Ascending aorta (tissue), 2 donors: ENCODE measurements at regions of chr11 and their contacts with region 1.

Region 1: DNA sequence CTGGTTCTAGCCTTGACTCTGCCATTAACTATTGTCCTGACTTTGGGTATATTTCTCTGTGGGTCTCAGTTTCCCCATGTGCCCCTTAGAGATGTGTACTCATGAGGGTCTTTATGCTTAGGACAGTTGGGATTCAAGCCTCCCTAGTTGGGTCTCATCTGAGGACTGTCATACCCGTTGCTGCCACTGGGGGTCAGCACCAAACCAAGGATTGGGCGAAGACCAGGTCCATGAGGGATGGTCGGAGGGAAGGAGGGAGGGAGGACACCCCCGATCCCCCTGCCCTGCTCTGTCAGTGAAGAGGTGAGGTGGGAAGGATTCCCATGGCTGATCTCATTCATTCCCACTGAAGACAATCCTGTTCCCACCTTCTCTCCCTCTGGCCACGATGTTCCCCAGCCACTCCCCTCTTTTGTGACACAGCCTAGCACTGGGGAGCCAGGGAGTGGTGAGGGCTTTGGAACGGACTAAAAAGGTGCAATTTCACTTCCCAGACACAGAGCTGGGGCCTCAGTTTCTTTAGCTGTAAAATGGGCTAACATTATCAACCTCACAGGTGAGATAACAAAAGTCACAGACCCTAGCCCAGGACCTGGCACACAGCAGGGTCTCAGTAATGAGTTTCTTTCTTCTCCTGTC is 12.4 kb upstream of the KLHL35 start:
- DNase-seq: peak; percentile 33 to 82
- H3K4me3 ChIP-seq: no peak overlapping the region
- H3K27ac ChIP-seq: no peak overlapping the region
- H3K4me1 ChIP-seq: no peaks in the 10 kb centered on the region
- H3K27me3 ChIP-seq: no peaks in the 10 kb centered on the region
- CTCF ChIP-seq: peak; percentile 94 to 96 (median 95)

Region 2: DNA sequence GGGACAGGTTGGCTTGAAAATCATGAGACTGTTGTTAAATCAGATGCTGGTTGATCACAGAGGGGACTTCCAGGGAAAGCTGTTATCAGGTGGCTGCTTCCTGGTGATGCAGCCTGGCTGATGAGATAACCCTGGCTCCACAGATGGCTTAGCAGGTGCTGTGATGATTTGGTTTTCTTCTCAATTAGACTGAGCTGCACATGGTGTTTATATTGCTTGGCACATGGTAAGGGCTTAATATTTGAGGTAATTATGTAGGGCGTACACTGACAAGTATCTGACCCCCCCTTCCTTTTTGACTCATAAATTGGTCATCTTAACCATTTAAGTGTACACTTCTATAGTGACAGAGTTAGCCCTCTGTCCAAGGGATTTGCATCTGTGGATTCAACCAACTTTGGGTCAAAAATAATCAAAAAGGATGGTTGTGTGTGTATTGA is 39.1 kb before region 1 on chr11:
- intact Hi-C with region 1: loop called (anchors 2 kb)
- DNase-seq: no peak
- H3K4me3 ChIP-seq: no peak overlapping the region
- H3K27ac ChIP-seq: no peak overlapping the region
- H3K4me1 ChIP-seq: no peaks in the 10 kb centered on the region
- H3K27me3 ChIP-seq: no peaks in the 10 kb centered on the region
- CTCF ChIP-seq: no peak

Region 3: GRCh38 chr11:75532200-75533048 is 87.0 kb after region 1 on chr11:
- intact Hi-C with region 1: loop called (anchors 1 kb)
- DNase-seq: peak in 1 of 2 donors; percentile 85
- H3K4me3 ChIP-seq: no peak overlapping the region
- H3K27ac ChIP-seq: no peak overlapping the region
- H3K4me1 ChIP-seq: no peaks in the 10 kb centered on the region
- H3K27me3 ChIP-seq: no peaks in the 10 kb centered on the region
- CTCF ChIP-seq: peak; percentile 76 to 91 (median 90)